OCI-LY7 (cell line): ENCODE measurements at regions of chr3 and their contacts with region 1.

Region 1: DNA sequence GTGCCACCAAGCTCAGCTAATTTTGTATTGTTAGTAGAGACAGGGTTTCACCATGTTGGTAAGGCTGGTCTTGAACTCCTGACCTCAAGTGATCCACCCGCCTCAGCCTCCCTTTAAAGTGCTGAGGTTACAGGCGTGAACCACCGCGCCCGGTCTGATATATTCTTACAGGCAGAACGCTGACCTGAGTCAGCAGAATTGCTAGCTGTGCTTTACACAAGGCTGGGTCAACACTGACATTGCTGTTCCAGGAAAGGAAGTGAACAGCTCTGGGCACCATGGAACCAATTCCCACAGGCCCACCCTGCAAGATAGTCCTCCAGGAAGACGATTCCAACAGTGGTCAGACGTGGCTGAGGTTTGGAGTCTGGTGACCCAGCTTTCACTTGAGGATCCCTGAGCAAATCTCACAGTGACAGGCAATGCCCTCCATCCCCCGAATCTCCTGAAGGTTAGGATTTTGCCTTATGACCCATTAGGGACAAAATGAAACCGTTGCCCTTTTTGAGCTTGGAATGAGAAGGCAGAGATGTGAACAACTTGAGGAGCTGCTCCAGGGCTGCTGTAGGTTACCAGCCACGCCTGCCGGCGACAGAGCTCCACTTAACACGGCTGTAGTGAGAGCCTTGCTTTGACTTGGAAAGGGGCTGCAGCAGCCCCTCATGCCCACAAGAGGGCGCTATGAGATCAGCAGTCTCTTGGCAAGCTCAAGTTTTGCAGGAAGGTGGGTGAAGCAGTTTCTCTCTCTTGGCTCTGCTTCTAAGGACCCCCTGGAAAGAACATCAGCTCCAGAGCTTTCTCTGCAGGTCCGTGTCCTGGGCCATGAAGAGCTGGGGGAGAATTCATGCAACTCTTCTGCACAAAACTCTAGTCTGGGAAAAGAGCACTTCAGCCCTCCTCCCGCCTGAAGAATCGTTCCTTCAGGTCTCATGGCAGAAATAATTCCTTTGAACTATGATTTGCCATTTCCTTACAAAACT is 74.1 kb downstream of the SENP2 start:
- DNase-seq: peak; percentile 76
- H3K4me3 ChIP-seq: no peak overlapping the region
- H3K27ac ChIP-seq: no peak overlapping the region
- H3K4me1 ChIP-seq: no peaks in the 10 kb centered on the region
- CTCF ChIP-seq: peak; percentile 98

Region 2: DNA sequence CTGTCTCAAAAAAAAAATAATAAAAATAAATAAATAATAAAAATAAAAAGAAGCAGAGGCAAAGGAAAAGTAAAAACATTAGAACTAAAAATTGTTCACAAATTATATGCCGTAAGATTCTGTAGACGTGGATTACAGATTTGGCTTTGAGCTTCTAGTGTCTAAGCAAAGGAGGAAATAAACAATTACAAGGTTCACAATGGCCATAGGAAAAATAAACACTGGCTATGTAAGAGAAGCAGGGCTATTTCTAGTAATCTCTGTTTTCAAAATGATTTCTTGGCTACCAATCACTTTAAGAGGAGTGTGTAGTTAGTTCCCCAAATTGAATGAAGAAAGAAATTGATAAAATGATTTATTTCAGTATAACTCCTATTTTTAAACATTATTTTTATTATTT is 215.9 kb before region 1 on chr3:
- CTCF ChIA-PET with region 1: no interaction called
- POLR2A ChIA-PET with region 1: no interaction called
- intact Hi-C with region 1: no loop called
- DNase-seq: no peak
- H3K4me3 ChIP-seq: no peak overlapping the region
- H3K27ac ChIP-seq: no peak overlapping the region
- H3K4me1 ChIP-seq: no peaks in the 10 kb centered on the region
- CTCF ChIP-seq: no peak

Region 3: GRCh38 chr3:185677146-185677829 is 17.1 kb after region 1 on chr3:
- CTCF ChIA-PET with region 1: interaction called, 12 read pairs
- POLR2A ChIA-PET with region 1: interaction called, 4 read pairs
- intact Hi-C with region 1: no loop called
- DNase-seq: peak; percentile 40
- H3K4me3 ChIP-seq: no peak overlapping the region
- H3K27ac ChIP-seq: no peak overlapping the region
- H3K4me1 ChIP-seq: no peaks in the 10 kb centered on the region
- CTCF ChIP-seq: peak; percentile 76